ENCODE measurements at regions of chr17 and their contacts with region 1.

Region 1: GRCh38 chr17:62189377-62189776 is 124.3 kb upstream of the MED13 start:
- DNase-seq: no peak
- CTCF ChIP-seq: no peak

Region 2: DNA sequence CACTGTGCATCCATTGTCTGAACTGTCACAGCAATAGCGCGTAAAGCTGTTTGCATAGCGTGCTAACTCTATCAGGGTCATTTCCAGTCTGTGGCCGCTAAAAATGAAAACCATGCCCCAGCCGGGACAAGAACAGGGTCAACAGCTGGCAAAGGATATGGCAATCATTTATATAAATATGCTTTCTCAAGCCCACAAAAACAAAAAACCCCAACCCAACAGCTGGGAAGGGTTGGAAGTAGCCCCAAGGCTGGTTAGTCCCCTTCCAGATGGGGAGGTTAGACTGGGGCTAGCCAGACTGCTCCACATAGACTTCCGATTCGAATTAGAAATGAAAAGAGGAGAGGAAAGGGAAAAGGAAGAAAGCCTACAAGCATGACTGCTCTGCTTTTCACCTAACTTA is 993.1 kb before region 1 on chr17:
- CTCF ChIA-PET with region 1: no interaction called
- POLR2A ChIA-PET with region 1: interaction called, 10 read pairs
- DNase-seq: no peak
- CTCF ChIP-seq: no peak

Region 3: DNA sequence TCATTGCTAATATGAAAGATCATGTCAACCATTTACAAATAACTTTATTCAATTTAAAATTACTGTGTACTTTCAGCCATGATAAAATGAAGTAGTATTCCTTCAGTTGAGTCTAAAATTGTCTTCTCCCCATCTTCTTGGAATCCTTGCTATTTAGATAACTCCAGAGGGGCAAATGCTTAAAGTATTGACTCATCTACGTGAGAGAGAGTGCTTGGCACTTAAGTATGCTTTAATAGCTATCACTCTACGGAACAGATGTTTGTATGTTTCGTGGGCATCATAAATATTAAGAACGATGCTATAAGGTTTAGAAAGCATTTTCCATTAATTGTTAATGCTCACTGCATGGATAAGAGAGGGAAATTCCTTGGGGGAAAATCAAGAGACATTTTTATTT is 55.0 kb before region 1 on chr17:
- CTCF ChIA-PET with region 1: no interaction called
- POLR2A ChIA-PET with region 1: no interaction called
- DNase-seq: no peak
- CTCF ChIP-seq: no peak

Region 4: GRCh38 chr17:62216847-62217246 is 27.5 kb after region 1 on chr17:
- CTCF ChIA-PET with region 1: no interaction called
- POLR2A ChIA-PET with region 1: no interaction called
- DNase-seq: no peak
- CTCF ChIP-seq: no peak